Activated CD4-positive, alpha-beta memory T cell treated with anti-CD3 and anti-CD28 coated beads for 36 hours (primary cell): ENCODE measurements at regions of chr22 and their contacts with region 1.

Region 1: GRCh38 chr22:42964994-42965699 is 49.8 kb downstream of the PACSIN2 start:
- DNase-seq: peak; percentile 55
- H3K4me3 Mint-ChIP-seq: no peak overlapping the region
- H3K27ac Mint-ChIP-seq: peak overlapping the region; percentile 77
- H3K4me1 Mint-ChIP-seq: peaks cover 51% of the 10 kb centered on the region
- H3K27me3 Mint-ChIP-seq: no peaks in the 10 kb centered on the region

Region 2: DNA sequence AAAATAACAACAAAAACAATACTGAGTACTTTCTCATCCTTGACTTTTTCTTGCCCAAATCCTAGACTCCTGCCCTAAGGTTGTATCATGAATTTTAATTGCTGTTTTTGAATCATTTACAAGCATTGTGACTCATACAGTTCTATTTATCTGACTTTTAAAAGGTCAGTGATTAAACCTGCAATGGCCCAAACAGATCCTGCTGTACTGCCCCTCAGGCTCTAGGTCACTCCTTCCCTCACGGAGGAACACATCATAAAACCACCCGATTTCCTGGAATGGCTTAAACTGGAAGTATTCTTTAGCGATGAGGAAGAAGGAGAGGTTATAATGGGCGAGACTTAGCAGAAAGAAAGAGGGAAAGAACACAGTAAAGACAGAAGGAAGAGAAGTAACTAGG is 120.4 kb before region 1 on chr22:
- CTCF ChIA-PET with region 1: no interaction called
- POLR2A ChIA-PET with region 1: no interaction called
- intact Hi-C with region 1: no loop called
- DNase-seq: no peak
- H3K4me3 Mint-ChIP-seq: no peak overlapping the region
- H3K27ac Mint-ChIP-seq: no peak overlapping the region
- H3K4me1 Mint-ChIP-seq: peaks cover 14% of the 10 kb centered on the region
- H3K27me3 Mint-ChIP-seq: no peaks in the 10 kb centered on the region

Region 3: GRCh38 chr22:42868751-42869251 is 96.3 kb before region 1 on chr22:
- CTCF ChIA-PET with region 1: no interaction called
- POLR2A ChIA-PET with region 1: no interaction called
- intact Hi-C with region 1: no loop called
- DNase-seq: no peak
- H3K4me3 Mint-ChIP-seq: no peak overlapping the region
- H3K27ac Mint-ChIP-seq: no peak overlapping the region
- H3K4me1 Mint-ChIP-seq: peaks cover 5% of the 10 kb centered on the region
- H3K27me3 Mint-ChIP-seq: no peaks in the 10 kb centered on the region

Region 4: DNA sequence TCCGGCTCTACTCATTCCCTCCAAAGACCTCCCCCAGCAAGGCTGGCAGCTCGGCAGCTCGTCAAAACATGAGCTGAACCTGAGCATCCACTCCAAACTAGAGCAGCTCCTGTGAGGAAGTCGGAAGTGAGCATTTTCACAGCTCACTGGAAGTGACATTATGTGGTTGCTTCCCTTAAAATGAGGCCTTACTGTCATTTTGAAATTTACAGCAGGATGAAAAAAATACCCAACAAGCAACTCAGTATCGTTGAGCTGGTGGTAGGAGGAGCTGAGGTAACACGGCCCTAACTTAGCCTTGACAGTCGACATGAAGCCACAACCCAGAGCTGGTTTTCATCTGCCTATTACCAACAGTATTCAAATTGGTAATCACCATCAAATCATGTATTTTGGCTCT is 70.1 kb before region 1 on chr22:
- CTCF ChIA-PET with region 1: interaction called, 3 read pairs
- POLR2A ChIA-PET with region 1: interaction called, 3 read pairs
- intact Hi-C with region 1: loop called (anchors 1 kb)
- DNase-seq: peak; percentile 50
- H3K4me3 Mint-ChIP-seq: no peak overlapping the region
- H3K27ac Mint-ChIP-seq: peak overlapping the region; percentile 18
- H3K4me1 Mint-ChIP-seq: peaks cover 35% of the 10 kb centered on the region
- H3K27me3 Mint-ChIP-seq: no peaks in the 10 kb centered on the region

Region 5: DNA sequence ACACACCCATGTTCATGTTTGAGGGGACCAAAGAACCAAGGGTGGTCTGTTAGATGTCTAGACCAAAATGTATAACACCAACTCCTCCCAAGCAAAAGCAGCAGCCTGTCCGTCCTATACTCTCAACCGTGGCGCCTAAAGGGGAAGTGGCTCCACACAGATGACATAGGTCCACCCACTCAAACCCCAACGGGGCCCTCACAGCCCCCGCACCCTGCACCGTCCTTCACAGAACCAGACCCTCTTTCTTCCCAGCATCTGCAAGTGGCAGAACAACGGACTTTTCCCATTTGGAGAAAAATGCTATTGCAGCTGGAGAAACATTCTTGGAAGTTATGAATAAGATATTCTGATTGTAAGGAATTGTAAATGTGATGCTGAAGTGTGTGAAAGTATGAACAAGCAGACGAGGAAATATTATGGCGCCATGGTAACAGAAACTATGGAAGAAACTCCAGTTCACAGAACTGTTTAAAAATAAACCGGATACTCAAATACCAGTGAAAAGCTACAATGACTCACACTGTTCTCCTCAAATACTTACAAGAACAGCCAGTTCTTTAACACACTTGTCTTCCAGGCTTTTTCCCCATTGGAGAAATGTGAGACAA is 31.6 kb before region 1 on chr22:
- CTCF ChIA-PET with region 1: no interaction called
- POLR2A ChIA-PET with region 1: no interaction called
- intact Hi-C with region 1: loop called (anchors 2 kb)
- DNase-seq: peak; percentile 52
- H3K4me3 Mint-ChIP-seq: peak overlapping the region; percentile 1
- H3K27ac Mint-ChIP-seq: peak overlapping the region; percentile 81
- H3K4me1 Mint-ChIP-seq: peaks cover 72% of the 10 kb centered on the region
- H3K27me3 Mint-ChIP-seq: no peaks in the 10 kb centered on the region

Region 6: DNA sequence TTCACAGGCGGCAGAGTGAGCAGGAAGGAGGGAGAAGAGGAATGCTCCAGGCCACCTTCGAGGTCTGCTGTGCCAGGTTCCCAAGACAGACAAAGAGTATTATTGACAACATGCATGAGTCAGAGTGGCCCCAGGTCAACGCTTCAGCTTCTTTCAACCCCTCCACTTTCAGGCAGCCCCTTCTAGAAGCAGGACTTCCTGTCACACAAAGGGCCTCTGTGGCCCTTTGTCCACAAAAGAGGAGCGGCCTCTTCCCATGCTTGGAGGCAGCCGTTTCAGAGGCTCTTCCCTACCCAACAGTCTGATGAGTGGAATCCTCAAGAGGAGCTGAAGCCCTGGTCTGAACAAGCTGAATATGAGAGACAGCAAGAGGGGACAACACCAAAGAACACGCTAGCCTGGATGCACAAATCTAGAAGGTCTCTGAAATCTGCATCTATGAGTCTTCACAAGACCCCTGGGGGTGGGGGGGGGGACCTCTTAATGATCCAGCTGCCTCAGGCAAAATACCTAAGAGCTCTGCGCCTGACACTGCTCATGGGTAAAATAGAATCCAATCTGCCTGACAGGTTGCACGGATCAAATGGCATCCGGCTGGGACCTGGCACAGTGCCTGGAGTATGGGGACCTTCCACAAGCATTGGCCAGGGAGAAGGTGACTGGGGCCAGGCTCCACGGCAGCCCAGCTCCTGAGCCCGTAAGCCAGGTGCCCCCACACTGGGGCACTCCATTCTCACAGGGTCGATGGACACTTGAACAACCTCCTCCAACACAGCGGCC is 17.7 kb before region 1 on chr22:
- CTCF ChIA-PET with region 1: no interaction called
- POLR2A ChIA-PET with region 1: no interaction called
- intact Hi-C with region 1: no loop called
- DNase-seq: no peak
- H3K4me3 Mint-ChIP-seq: no peak overlapping the region
- H3K27ac Mint-ChIP-seq: no peak overlapping the region
- H3K4me1 Mint-ChIP-seq: peaks cover 41% of the 10 kb centered on the region
- H3K27me3 Mint-ChIP-seq: no peaks in the 10 kb centered on the region

Region 7: GRCh38 chr22:42990139-42990767 is 25.1 kb after region 1 on chr22:
- CTCF ChIA-PET with region 1: no interaction called
- POLR2A ChIA-PET with region 1: no interaction called
- intact Hi-C with region 1: no loop called
- DNase-seq: no peak
- H3K4me3 Mint-ChIP-seq: no peak overlapping the region
- H3K27ac Mint-ChIP-seq: no peak overlapping the region
- H3K4me1 Mint-ChIP-seq: peaks cover 17% of the 10 kb centered on the region
- H3K27me3 Mint-ChIP-seq: no peaks in the 10 kb centered on the region

Region 8: DNA sequence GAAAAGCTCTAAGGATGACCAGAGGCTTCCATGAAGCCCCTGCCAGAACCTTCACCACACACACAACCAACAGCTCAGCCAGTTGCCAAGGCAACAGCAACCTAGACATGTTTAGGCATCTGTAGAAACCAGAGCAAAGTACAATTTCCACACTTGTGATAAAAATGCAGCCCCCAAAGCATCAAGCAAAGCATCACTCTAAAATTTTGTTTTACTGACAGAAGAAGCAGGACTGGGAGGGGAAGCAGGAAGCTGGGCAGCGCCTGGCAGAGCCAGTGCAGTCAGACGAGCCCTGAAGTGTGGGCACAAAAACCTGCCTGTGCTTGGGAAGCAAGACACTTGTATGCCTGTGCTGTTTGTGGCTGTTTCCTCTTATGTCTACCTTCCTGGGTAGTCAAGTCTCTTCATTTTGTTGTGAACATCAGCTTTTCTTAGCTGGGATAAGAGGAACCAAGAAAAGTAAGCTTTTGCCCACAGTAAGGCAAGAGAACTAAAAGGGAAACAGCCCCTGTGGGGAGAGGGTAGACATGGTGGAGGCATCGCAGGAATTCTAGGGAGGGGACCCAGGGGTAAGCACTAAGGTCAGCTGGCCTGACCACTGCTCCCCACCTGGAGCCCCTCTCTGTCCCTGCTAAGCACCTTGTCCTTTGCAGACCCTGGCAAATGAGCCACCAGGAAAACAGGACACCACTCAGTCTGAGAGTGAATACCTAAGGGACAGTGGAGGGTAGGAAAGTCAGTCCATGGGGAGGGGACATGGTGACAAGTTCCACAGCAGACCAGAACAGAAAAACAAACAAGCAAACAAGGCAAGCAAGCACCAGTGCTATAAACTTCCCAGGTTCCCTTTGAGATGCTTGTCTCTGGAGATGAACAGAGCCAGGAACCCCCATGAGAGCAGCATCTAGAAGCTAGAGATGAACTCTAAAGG is 36.4 kb after region 1 on chr22:
- CTCF ChIA-PET with region 1: interaction called, 8 read pairs
- POLR2A ChIA-PET with region 1: interaction called, 4 read pairs
- intact Hi-C with region 1: loop called (anchors 1 kb)
- DNase-seq: peak; percentile 25
- H3K4me3 Mint-ChIP-seq: no peak overlapping the region
- H3K27ac Mint-ChIP-seq: no peak overlapping the region
- H3K4me1 Mint-ChIP-seq: peaks cover 86% of the 10 kb centered on the region
- H3K27me3 Mint-ChIP-seq: no peaks in the 10 kb centered on the region

Region 9: GRCh38 chr22:43014869-43015676 is 49.9 kb after region 1 on chr22 and contains the start of gene PACSIN2:
- CTCF ChIA-PET with region 1: interaction called, 6 read pairs
- POLR2A ChIA-PET with region 1: interaction called, 5 read pairs
- intact Hi-C with region 1: loop called (anchors 2 kb)
- DNase-seq: peak; percentile 99
- H3K4me3 Mint-ChIP-seq: peak within 1 kb of the TSS; percentile 93
- H3K27ac Mint-ChIP-seq: peak within 1 kb of the TSS; percentile 82
- H3K4me1 Mint-ChIP-seq: peaks cover 23% of the 10 kb centered on the region
- H3K27me3 Mint-ChIP-seq: no peaks in the 10 kb centered on the region
- total RNA-seq, gene PACSIN2: 35.0 to 35.9 TPM